Activated naive CD4-positive, alpha-beta T cell treated with anti-CD3 and anti-CD28 coated beads for 36 hours (primary cell): ENCODE measurements at regions of chr14 and their contacts with region 1.

Region 1: GRCh38 chr14:67666750-67667449 is 7.5 kb downstream of the VTI1B start:
- DNase-seq: peak; percentile 55
- H3K4me3 Mint-ChIP-seq: no peak overlapping the region
- H3K27ac Mint-ChIP-seq: no peak overlapping the region
- H3K4me1 Mint-ChIP-seq: peaks cover 50% of the 10 kb centered on the region
- H3K27me3 Mint-ChIP-seq: no peaks in the 10 kb centered on the region

Region 2: DNA sequence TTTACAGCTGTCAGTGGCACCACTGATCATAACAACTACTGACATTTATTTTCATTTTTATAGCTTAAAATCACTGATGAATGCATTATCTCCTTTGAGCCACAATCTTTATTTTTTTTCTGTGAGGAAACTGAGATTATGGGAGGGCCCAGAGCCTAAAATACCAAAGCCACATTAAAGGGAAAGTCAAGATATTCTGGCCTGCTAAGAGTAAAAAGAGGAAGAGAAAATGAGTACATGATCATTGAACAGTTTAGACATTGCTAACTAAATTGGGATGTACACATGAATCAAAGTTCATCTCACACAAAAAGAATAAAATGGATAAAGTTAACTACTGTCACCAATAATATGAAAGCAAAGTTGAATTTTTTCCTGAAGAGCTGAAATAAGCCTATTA is 648.2 kb before region 1 on chr14:
- CTCF ChIA-PET with region 1: no interaction called
- intact Hi-C with region 1: no loop called
- DNase-seq: no peak
- H3K4me3 Mint-ChIP-seq: no peak overlapping the region
- H3K27ac Mint-ChIP-seq: no peak overlapping the region
- H3K4me1 Mint-ChIP-seq: peaks cover 5% of the 10 kb centered on the region
- H3K27me3 Mint-ChIP-seq: no peaks in the 10 kb centered on the region

Region 3: GRCh38 chr14:67564236-67564635 is 102.7 kb before region 1 on chr14:
- CTCF ChIA-PET with region 1: no interaction called
- intact Hi-C with region 1: no loop called
- DNase-seq: no peak
- H3K4me3 Mint-ChIP-seq: no peak overlapping the region
- H3K27ac Mint-ChIP-seq: no peak overlapping the region
- H3K4me1 Mint-ChIP-seq: no peaks in the 10 kb centered on the region
- H3K27me3 Mint-ChIP-seq: no peaks in the 10 kb centered on the region

Region 4: GRCh38 chr14:67583711-67584644 is 82.9 kb before region 1 on chr14:
- CTCF ChIA-PET with region 1: interaction called, 27 read pairs
- intact Hi-C with region 1: loop called (anchors 1 kb)
- DNase-seq: peak; percentile 61
- H3K4me3 Mint-ChIP-seq: no peak overlapping the region
- H3K27ac Mint-ChIP-seq: no peak overlapping the region
- H3K4me1 Mint-ChIP-seq: no peaks in the 10 kb centered on the region
- H3K27me3 Mint-ChIP-seq: no peaks in the 10 kb centered on the region

Region 5: DNA sequence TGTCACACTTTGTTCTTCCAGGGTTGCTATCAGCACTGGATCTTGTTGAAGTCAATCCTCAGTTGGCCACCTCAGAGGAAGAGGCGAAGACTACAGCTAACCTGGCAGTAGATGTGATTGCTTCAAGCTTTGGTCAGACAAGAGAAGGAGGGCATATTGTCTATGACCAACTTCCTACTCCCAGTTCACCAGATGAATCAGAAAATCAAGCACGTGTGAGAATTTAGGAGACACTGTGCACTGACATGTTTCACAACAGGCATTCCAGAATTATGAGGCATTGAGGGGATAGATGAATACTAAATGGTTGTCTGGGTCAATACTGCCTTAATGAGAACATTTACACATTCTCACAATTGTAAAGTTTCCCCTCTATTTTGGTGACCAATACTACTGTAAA is 16.2 kb before region 1 on chr14:
- CTCF ChIA-PET with region 1: interaction called, 15 read pairs
- intact Hi-C with region 1: no loop called
- DNase-seq: no peak
- H3K4me3 Mint-ChIP-seq: no peak overlapping the region
- H3K27ac Mint-ChIP-seq: no peak overlapping the region
- H3K4me1 Mint-ChIP-seq: no peaks in the 10 kb centered on the region
- H3K27me3 Mint-ChIP-seq: no peaks in the 10 kb centered on the region

Region 6: DNA sequence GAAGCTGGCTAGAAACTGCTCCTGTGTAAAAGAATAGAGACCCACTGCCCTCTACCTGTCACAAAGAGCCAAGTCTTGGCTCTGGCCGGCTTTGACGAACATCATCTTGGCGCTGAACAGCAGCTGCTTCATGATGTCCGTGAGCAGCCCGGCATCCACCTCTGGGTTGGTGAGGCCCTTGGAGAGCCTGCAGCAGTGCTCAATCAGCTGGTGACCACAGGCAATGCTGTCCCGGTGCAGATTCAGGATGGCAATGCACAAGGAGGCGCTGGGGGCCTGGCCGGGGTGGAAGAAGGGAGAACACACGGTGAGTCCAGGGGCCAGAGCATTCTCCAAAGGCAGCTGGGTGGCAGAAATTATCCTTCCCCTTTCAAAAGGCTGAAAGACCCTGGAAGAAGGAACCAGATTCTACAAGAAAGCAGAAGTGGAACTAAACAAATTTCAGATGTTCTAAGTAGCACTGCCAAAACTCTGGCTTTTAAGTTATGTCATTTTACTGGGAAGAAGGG is 99.3 kb after region 1 on chr14:
- CTCF ChIA-PET with region 1: no interaction called
- intact Hi-C with region 1: no loop called
- DNase-seq: no peak
- H3K4me3 Mint-ChIP-seq: no peak overlapping the region
- H3K27ac Mint-ChIP-seq: no peak overlapping the region
- H3K4me1 Mint-ChIP-seq: no peaks in the 10 kb centered on the region
- H3K27me3 Mint-ChIP-seq: no peaks in the 10 kb centered on the region

Region 7: DNA sequence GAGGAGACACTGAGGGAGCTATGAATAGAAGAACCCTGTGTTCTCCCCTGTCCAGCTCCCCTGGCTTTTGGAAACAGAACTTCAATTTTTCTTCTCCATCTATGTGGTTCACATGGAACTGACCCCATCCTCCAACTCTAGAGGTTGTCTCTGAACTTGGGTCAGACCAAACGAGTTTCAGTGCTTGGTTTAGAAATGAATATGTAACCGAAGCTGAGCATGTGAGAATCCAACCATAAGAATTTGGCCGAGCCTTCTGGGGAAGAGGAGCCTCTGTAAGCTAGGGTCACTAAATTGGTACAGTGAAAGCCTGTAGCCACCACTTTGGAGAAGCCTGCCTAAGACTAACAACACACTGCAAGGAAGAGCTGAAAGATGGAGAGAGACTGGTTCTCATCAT is 661.6 kb after region 1 on chr14:
- CTCF ChIA-PET with region 1: no interaction called
- intact Hi-C with region 1: no loop called
- DNase-seq: no peak
- H3K4me3 Mint-ChIP-seq: no peak overlapping the region
- H3K27ac Mint-ChIP-seq: no peak overlapping the region
- H3K4me1 Mint-ChIP-seq: no peaks in the 10 kb centered on the region
- H3K27me3 Mint-ChIP-seq: no peaks in the 10 kb centered on the region